ENCODE measurements at regions of chr6 and their contacts with region 1.

Region 1: DNA sequence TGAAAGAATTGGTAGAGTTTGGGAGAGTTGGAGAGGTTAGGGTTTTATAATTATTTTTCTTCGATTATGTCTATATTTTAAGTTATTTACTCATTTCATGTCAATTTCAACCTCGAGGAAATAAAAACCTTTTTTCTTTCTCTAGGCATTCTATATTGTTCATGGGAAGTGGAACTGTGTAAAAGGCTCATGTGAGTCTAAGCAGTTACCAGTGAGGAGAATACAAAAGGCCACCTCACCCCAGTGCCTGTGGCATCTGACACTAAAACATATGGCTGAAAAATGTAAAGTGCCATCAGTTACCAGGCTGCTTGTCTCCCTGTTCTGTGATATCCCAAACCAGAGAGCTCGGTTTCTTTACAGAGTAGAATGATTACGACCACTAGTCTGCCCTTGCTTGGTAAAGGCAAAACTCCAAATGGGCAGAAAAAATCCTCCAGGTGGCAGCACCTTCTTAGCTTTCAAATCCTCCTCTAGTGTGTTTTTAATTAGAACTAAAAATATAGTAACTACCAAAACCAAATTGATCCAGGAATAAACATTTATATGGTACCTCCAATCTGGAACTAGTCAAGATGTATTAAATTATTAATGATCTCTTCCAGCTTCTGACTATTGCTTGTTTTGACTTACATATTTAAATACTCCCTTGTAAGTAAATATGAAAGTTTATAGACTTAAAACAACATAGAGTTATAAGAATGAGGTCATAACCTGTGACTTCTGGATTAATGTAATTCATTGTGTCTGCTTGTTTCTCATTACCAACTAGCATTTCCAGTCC is 122.6 kb upstream of the MCHR2 start:
- DNase-seq: peak; percentile 80
- ATAC-seq: peak; percentile 92
- H3K4me3 ChIP-seq: no peak overlapping the region
- H3K27ac ChIP-seq: no peak overlapping the region
- H3K4me1 ChIP-seq: no peaks in the 10 kb centered on the region
- H3K27me3 ChIP-seq: no peaks in the 10 kb centered on the region
- CTCF ChIP-seq: peak; percentile 64 to 93 (median 85)
- POLR2A ChIP-seq: no peak
- RAD21 ChIP-seq: peak; percentile 91

Region 2: GRCh38 chr6:100105138-100105753 is 11.4 kb before region 1 on chr6:
- CTCF ChIA-PET with region 1: interaction called, 10 read pairs
- POLR2A ChIA-PET with region 1: no interaction called
- RAD21 ChIA-PET with region 1: interaction called in 1 of 2 experiments, 3 read pairs
- intact Hi-C with region 1: no loop called
- DNase-seq: no peak
- ATAC-seq: no peak
- H3K4me3 ChIP-seq: no peak overlapping the region
- H3K27ac ChIP-seq: no peak overlapping the region
- H3K4me1 ChIP-seq: no peaks in the 10 kb centered on the region
- H3K27me3 ChIP-seq: no peaks in the 10 kb centered on the region
- CTCF ChIP-seq: no peak
- POLR2A ChIP-seq: no peak
- RAD21 ChIP-seq: no peak

Region 3: DNA sequence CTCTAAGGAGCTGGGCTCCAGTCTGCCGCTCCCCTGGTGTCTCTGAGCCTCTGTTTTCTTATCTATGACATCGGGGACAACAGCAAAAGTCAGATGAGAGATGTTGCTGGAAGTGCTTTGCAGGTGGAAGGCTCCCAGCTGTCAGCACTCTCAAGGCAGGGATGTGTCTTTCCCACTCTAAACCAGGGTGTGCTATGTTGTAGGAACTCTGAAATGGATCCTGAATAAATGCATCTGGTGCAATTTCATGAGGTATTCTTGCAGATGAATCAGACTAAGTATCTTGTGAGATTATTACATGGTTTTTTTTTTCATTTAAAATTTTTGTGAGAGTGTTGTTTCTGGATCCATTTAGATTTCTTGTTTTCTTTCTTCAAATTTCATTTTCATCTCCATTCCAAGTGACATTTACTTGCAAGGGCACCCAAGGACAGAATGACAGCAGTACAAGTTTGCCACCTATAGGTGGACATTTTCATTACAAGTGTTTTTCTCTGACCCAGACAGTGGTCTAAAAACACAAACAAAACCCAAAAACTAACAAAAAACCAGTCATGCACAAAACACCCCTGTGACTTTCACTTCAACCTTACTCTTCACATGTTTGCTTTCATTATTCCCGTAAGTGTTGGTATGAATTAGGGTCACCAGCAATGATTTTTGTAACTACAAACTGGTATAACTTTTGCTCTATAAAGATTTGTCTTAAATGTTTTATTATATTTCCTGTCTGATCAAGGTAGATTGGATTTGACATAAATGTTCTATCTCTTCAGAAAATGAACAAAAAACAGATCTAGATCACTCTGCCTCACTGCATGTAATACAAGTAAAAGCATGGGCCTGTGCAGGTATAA is 362.8 kb after region 1 on chr6:
- CTCF ChIA-PET with region 1: interaction called, 10 read pairs
- POLR2A ChIA-PET with region 1: no interaction called
- RAD21 ChIA-PET with region 1: interaction called in 1 of 2 experiments, 3 read pairs
- intact Hi-C with region 1: loop called (anchors 1 kb)
- DNase-seq: peak; percentile 54
- ATAC-seq: peak; percentile 81
- H3K4me3 ChIP-seq: no peak overlapping the region
- H3K27ac ChIP-seq: no peak overlapping the region
- H3K4me1 ChIP-seq: peaks cover 0 to 8% of the 10 kb centered on the region in 2 experiments; a peak in 2 of 4 replicates
- H3K27me3 ChIP-seq: no peaks in the 10 kb centered on the region
- CTCF ChIP-seq: peak; percentile 61 to 83 (median 82)
- POLR2A ChIP-seq: no peak
- RAD21 ChIP-seq: peak; percentile 90

Region 4: GRCh38 chr6:100573167-100573566 is 456.6 kb after region 1 on chr6:
- CTCF ChIA-PET with region 1: interaction called, 3 read pairs
- POLR2A ChIA-PET with region 1: no interaction called
- RAD21 ChIA-PET with region 1: no interaction called
- intact Hi-C with region 1: loop called (anchors 1 kb)
- DNase-seq: peak; percentile 16
- ATAC-seq: no peak
- H3K4me3 ChIP-seq: no peak overlapping the region
- H3K27ac ChIP-seq: no peak overlapping the region
- H3K4me1 ChIP-seq: no peaks in the 10 kb centered on the region
- H3K27me3 ChIP-seq: no peaks in the 10 kb centered on the region
- CTCF ChIP-seq: peak; percentile 14 to 47 (median 43); a peak in 3 of 6 replicates
- POLR2A ChIP-seq: no peak
- RAD21 ChIP-seq: 0 out of 2 replicates have a peak, but pooled peaks have one; percentile 31

Region 5: DNA sequence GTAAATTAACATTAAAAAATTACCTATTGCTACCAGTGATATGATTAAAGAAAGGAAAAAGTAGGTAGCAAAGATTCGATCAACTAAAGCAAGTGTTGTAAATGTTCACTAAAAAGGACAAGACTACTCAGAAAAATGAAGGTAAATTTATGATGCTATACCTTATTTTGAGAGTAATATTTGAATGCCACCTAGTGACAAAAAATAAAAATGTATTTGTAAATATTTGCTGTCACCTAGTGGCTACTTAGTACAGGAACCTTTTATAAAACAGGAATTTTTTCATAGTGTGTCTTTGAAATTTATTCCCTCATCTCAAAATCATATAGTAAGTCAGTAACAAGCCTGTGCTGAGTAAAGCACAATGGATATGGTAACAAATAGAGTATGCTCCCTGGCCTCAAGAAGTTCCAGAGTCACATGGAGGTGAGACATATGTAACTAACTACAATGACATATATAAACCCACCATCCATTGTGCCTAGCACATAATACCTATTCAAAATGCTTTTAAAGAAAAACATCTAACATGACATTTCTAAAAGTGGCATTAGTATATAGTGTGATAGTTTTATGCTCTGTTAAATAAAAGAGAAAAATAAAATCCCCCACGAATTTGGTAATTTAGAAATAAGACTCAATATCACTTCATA is 541.2 kb after region 1 on chr6:
- CTCF ChIA-PET with region 1: interaction called, 15 read pairs
- POLR2A ChIA-PET with region 1: no interaction called
- RAD21 ChIA-PET with region 1: interaction called in 1 of 2 experiments, 4 read pairs
- intact Hi-C with region 1: loop called (anchors 1 kb)
- DNase-seq: no peak
- ATAC-seq: no peak; the same call in 1 of the 2 replicates
- H3K4me3 ChIP-seq: no peak overlapping the region
- H3K27ac ChIP-seq: no peak overlapping the region
- H3K4me1 ChIP-seq: no peaks in the 10 kb centered on the region
- H3K27me3 ChIP-seq: no peaks in the 10 kb centered on the region
- CTCF ChIP-seq: peak; percentile 48 to 99 (median 86); a peak in 5 of 6 replicates
- POLR2A ChIP-seq: no peak
- RAD21 ChIP-seq: peak; percentile 81

Region 6: GRCh38 chr6:100664274-100665040 is 547.9 kb after region 1 on chr6:
- CTCF ChIA-PET with region 1: interaction called, 13 read pairs
- POLR2A ChIA-PET with region 1: no interaction called
- RAD21 ChIA-PET with region 1: no interaction called
- intact Hi-C with region 1: no loop called
- DNase-seq: no peak
- ATAC-seq: no peak
- H3K4me3 ChIP-seq: no peak overlapping the region
- H3K27ac ChIP-seq: no peak overlapping the region
- H3K4me1 ChIP-seq: peaks cover 0 to 8% of the 10 kb centered on the region in 2 experiments; a peak in 1 of 4 replicates
- H3K27me3 ChIP-seq: no peaks in the 10 kb centered on the region
- CTCF ChIP-seq: peak; percentile 40 to 52 (median 42); a peak in 5 of 6 replicates
- POLR2A ChIP-seq: no peak
- RAD21 ChIP-seq: peak; percentile 53; the same call in 1 of the 2 replicates